ENCODE measurements at regions of chr2 and their contacts with region 1.

Region 1: GRCh38 chr2:203814661-203815540 is 52.7 kb upstream of the CTLA4 start:
- DNase-seq: peak; percentile 72 to 77
- H3K4me3 ChIP-seq: no peak overlapping the region
- H3K4me3 Mint-ChIP-seq: peak overlapping the region; percentile 59
- H3K27ac Mint-ChIP-seq: peak overlapping the region; percentile 75
- H3K4me1 ChIP-seq: peaks cover 39% of the 10 kb centered on the region
- H3K4me1 Mint-ChIP-seq: peaks cover 27% of the 10 kb centered on the region
- H3K27me3 ChIP-seq: no peaks in the 10 kb centered on the region
- H3K27me3 Mint-ChIP-seq: no peaks in the 10 kb centered on the region
- CTCF ChIP-seq: peak; percentile 72 to 83

Region 2: GRCh38 chr2:202588647-202589581 is 1226.0 kb before region 1 on chr2:
- CTCF ChIA-PET with region 1: no interaction called
- POLR2A ChIA-PET with region 1: no interaction called
- intact Hi-C with region 1: loop called (anchors 10 kb)
- DNase-seq: peak; percentile 81 to 86
- H3K4me3 ChIP-seq: no peak overlapping the region
- H3K4me3 Mint-ChIP-seq: peak overlapping the region; percentile 40
- H3K27ac Mint-ChIP-seq: no peak overlapping the region
- H3K4me1 ChIP-seq: peaks cover 11% of the 10 kb centered on the region
- H3K4me1 Mint-ChIP-seq: peaks cover 9% of the 10 kb centered on the region
- H3K27me3 ChIP-seq: no peaks in the 10 kb centered on the region
- H3K27me3 Mint-ChIP-seq: no peaks in the 10 kb centered on the region
- CTCF ChIP-seq: peak; percentile 85 to 86

Region 3: GRCh38 chr2:203453858-203454451 is 360.9 kb before region 1 on chr2:
- CTCF ChIA-PET with region 1: no interaction called
- POLR2A ChIA-PET with region 1: no interaction called
- intact Hi-C with region 1: loop called (anchors 2 kb)
- DNase-seq: peak in 1 of 2 experiments; percentile 51
- H3K4me3 ChIP-seq: no peak overlapping the region
- H3K4me3 Mint-ChIP-seq: no peak overlapping the region
- H3K27ac Mint-ChIP-seq: no peak overlapping the region
- H3K4me1 ChIP-seq: peaks cover 10% of the 10 kb centered on the region
- H3K4me1 Mint-ChIP-seq: peaks cover 13% of the 10 kb centered on the region
- H3K27me3 ChIP-seq: no peaks in the 10 kb centered on the region
- H3K27me3 Mint-ChIP-seq: no peaks in the 10 kb centered on the region
- CTCF ChIP-seq: peak; percentile 70 to 80

Region 4: DNA sequence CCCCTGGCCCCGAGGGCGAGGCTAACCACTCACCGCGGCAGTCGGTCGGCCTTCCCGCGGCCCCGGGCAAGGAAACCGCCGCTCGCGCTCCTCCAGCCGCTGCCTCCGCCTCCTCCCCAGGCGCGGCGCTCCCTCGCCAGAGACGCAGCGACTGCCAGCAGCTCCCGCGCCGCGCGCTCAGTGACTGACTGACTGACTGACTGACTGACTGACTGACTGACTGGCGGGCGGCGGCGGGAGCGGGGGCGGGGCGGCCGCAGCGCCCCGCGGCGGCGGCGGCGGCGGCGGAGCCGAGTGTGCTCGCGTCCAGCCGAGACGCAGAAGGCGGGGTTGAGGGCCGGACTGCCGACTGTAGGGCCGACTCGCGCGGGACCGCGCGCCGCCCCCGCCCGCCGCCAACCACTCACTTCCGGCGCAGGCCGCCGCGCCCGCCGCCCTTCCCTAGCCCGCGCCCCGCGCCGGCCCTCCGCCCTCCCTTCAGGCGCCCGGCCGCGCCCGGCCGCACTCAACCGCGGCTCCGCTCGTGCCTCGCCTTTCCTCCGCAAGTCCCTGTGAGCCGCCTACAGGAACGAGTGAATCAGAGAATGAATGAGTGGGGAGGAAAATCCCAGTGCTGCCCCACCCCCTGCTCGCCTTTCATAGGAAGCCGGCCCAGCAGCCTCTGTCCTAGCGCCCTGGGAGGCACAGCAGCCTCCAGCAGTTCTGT is 279.7 kb before region 1 on chr2 and contains the start of gene RAPH1:
- CTCF ChIA-PET with region 1: interaction called, 7 read pairs
- POLR2A ChIA-PET with region 1: no interaction called
- intact Hi-C with region 1: loop called (anchors 1 kb)
- DNase-seq: peak; percentile 92
- H3K4me3 ChIP-seq: peak within 1 kb of the TSS; percentile 84
- H3K4me3 Mint-ChIP-seq: peak within 1 kb of the TSS; percentile 97
- H3K27ac Mint-ChIP-seq: peak within 1 kb of the TSS; percentile 36
- H3K4me1 ChIP-seq: peaks cover 4% of the 10 kb centered on the region; the same call in 1 of the 2 replicates
- H3K4me1 Mint-ChIP-seq: peaks cover 14% of the 10 kb centered on the region
- H3K27me3 ChIP-seq: no peaks in the 10 kb centered on the region
- H3K27me3 Mint-ChIP-seq: no peaks in the 10 kb centered on the region
- CTCF ChIP-seq: no peak
- total RNA-seq, gene RAPH1: 109 and 114 TPM in 2 replicates

Region 5: GRCh38 chr2:203694191-203694590 is 120.7 kb before region 1 on chr2:
- CTCF ChIA-PET with region 1: interaction called, 4 read pairs
- POLR2A ChIA-PET with region 1: no interaction called
- intact Hi-C with region 1: loop called (anchors 2 kb)
- DNase-seq: no peak
- H3K4me3 ChIP-seq: no peak overlapping the region
- H3K4me3 Mint-ChIP-seq: no peak overlapping the region
- H3K27ac Mint-ChIP-seq: no peak overlapping the region
- H3K4me1 ChIP-seq: peaks cover 91% of the 10 kb centered on the region
- H3K4me1 Mint-ChIP-seq: peaks cover 62% of the 10 kb centered on the region
- H3K27me3 ChIP-seq: no peaks in the 10 kb centered on the region
- H3K27me3 Mint-ChIP-seq: no peaks in the 10 kb centered on the region
- CTCF ChIP-seq: no peak

Region 6: DNA sequence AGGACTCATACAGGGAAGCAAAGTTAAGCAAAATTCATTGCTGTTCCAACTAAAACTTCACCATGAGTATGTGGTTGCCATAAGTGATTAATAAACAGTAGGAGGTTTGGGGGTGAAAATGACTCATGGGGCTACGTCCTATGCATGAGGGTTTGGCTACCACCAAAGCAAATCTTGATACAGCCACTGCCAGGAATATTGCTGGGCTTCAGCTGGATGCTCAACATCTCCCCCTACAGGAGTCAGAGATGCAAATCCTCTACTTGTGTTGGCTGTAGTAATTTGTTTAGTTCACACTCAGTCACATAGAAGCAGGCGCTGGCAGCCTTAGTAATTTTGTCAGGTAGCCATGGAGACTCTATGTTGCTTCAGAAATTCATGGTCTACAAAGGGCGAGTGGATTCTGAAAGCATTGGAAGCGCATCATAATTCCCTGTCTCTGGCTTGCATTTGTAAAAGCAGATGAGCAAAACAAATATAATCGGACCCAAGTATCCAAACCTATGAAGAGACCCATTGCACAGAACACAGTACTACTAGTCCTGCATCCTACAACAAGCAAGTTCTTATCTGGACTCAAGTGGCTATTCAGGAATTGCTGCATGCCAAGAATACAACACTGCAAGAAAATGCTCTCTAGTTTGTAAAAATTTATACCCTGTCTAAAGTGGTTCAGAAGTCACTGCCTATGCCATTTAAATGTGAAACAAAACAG is 32.5 kb before region 1 on chr2:
- CTCF ChIA-PET with region 1: interaction called, 33 read pairs
- POLR2A ChIA-PET with region 1: interaction called, 9 read pairs
- intact Hi-C with region 1: loop called (anchors 1 kb)
- DNase-seq: peak; percentile 75 to 78
- H3K4me3 ChIP-seq: no peak overlapping the region
- H3K4me3 Mint-ChIP-seq: peak overlapping the region; percentile 37
- H3K27ac Mint-ChIP-seq: peak overlapping the region; percentile 96
- H3K4me1 ChIP-seq: peaks cover 44% of the 10 kb centered on the region
- H3K4me1 Mint-ChIP-seq: peaks cover 27% of the 10 kb centered on the region
- H3K27me3 ChIP-seq: no peaks in the 10 kb centered on the region
- H3K27me3 Mint-ChIP-seq: no peaks in the 10 kb centered on the region
- CTCF ChIP-seq: peak; percentile 68

Region 7: GRCh38 chr2:203909261-203909967 is 94.5 kb after region 1 on chr2:
- CTCF ChIA-PET with region 1: interaction called, 14 read pairs
- POLR2A ChIA-PET with region 1: no interaction called
- intact Hi-C with region 1: loop called (anchors 1 kb)
- DNase-seq: peak in 1 of 2 experiments; percentile 53
- H3K4me3 ChIP-seq: no peak overlapping the region
- H3K4me3 Mint-ChIP-seq: peak overlapping the region; percentile 9
- H3K27ac Mint-ChIP-seq: no peak overlapping the region
- H3K4me1 ChIP-seq: peaks cover 14% of the 10 kb centered on the region
- H3K4me1 Mint-ChIP-seq: peaks cover 14% of the 10 kb centered on the region
- H3K27me3 ChIP-seq: no peaks in the 10 kb centered on the region
- H3K27me3 Mint-ChIP-seq: no peaks in the 10 kb centered on the region
- CTCF ChIP-seq: peak; percentile 79 to 80

Measured in Caco-2 (cell line).